Vagina (tissue), 2 donors: ENCODE measurements at regions of chr16 and their contacts with region 1.

Region 1: DNA sequence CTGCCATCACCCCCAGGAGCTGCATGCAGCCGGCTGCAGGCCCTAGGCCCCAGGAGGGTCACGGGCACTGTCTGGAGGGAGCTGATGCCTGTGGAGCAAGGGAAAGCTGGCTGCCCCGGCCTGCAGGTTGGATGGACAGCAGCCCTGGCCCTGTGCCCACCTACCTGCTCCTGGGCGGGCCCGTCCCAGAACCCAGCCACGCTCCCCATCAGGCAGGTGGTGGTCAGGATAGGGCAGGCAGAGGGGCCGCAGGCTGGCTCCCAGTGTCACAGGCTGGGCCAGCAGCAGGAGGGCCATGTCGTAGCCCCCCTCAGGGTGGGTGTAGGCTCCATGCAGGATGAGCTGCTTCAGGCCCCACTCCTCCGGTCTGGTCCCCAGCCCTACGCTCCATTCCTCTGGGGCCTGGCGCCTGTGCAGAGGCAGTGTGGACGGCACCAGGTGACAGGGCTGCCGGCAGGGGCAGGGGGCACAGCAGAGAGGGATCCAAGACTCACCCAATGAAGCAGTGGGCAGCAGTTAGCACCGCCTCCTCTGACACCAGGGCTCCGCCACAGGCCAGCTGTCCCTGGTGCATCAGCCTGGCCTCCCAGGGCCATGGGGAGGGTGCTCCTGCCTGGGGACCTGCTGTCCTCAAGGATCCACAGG is 4.0 kb downstream of the PRSS53 start:
- DNase-seq: no peak
- H3K4me3 ChIP-seq: no peak overlapping the region
- H3K27ac ChIP-seq: no peak overlapping the region
- H3K4me1 ChIP-seq: peaks cover 13% of the 10 kb centered on the region
- H3K27me3 ChIP-seq: no peaks in the 10 kb centered on the region
- CTCF ChIP-seq: no peak
- POLR2A ChIP-seq: no peak

Region 2: DNA sequence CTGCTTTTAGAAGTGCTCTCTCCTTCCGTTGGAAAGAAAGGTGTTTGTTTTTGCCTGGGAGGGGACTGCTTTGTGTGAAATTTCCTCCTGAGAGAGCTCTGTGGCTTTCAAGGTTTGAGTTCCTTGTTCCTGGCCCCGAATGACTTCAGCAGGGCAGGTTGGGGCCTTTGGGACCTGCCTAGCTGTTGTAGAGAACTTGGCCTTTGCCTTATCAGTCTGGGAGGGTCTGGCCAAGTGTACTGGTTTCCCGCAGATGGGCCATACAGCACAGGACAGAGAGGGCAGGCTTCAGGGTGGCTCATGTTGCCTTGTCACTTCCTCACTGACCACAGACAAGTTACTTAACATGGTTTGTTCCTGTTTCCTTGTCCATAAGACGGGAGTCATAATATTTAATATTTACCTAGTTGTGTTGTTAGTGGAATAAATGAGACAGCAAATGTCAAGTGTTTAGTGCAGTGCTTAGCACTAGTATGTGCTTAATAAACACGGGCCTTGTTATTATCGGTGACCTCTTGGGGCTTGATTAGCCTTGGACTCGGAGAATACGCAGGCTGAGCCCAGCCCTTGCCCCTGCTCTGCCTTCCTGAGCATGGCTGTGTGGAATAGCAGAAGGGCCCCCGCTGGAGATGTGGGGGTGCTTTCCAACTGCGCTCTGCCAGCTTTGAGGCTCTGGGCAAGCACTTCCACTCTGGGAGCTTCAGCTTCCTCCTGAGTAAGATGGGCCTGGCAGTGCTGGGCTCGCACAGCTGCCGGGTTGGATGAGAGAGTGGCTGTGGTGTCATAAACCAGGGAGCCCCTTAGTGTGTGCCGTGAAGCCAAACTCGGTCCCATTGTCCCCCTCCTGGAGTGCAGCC is 44.2 kb after region 1 on chr16:
- intact Hi-C with region 1: no loop called
- DNase-seq: no peak
- H3K4me3 ChIP-seq: no peak overlapping the region
- H3K27ac ChIP-seq: peak overlapping the region; percentile 72
- H3K4me1 ChIP-seq: peaks cover 40% of the 10 kb centered on the region
- H3K27me3 ChIP-seq: no peaks in the 10 kb centered on the region
- CTCF ChIP-seq: no peak
- POLR2A ChIP-seq: no peak

Region 3: DNA sequence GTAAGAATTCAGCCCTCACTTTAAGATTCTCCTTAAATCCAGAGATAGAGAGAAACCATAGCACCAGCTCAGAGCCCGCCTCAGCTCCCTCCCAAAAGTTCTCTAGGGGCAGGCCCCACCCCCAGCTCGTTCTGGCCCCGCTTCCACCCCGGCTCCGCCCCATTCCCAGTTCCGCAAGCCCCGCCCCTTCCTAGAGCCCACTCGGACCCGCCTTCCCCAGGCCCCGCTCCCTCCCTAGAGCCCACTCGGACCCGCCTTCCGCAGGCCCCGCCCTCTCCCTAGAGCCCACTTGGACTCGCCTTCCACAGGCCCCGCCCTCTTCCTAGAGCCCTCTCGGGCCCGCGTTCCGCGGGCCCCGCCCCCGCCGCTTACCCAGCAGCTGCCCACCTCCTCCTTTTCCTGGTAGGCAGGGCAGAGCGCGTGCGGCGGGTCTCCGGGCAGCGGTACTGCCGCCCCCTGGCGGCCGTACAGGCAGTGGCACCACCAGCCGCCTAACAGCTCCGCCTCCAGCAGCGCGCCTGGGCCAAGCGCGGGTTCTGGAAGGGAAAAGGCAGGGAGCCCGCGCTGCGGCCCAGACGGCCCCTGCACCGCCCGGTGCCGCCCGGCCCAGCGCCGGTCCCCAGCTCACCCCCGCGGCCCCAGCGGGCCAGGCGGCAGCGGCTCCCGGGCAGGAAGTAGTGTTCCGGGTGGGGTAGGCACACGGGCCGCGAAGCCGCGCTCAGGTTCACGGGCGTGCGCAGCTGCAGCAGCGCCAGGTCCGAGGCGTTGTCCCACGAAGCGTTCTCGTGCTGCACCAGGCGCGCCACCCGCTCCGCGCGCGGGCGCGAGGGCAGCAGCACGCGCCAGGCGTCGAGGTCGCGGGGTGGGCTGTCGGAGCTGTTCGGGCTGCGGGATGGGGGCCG is 57.6 kb after region 1 on chr16:
- intact Hi-C with region 1: loop called (anchors 10 kb)
- DNase-seq: peak; percentile 99 to 100
- H3K4me3 ChIP-seq: peak overlapping the region; percentile 51 to 70
- H3K27ac ChIP-seq: peak overlapping the region; percentile 87
- H3K4me1 ChIP-seq: peaks cover 39% of the 10 kb centered on the region
- H3K27me3 ChIP-seq: no peaks in the 10 kb centered on the region
- CTCF ChIP-seq: peak; percentile 96 to 97 (median 97)
- POLR2A ChIP-seq: peak in 1 of 2 donors; percentile 18